ENCODE measurements at regions of chr1 and their contacts with region 1.

Region 1: GRCh38 chr1:163231385-163231784 is 28.7 kb upstream of the RGS5 start:
- DNase-seq: no peak
- H3K4me3 Mint-ChIP-seq: no peak overlapping the region
- H3K27ac Mint-ChIP-seq: no peak overlapping the region
- H3K4me1 Mint-ChIP-seq: no peaks in the 10 kb centered on the region
- H3K27me3 Mint-ChIP-seq: no peaks in the 10 kb centered on the region
- CTCF ChIP-seq: no peak

Region 2: DNA sequence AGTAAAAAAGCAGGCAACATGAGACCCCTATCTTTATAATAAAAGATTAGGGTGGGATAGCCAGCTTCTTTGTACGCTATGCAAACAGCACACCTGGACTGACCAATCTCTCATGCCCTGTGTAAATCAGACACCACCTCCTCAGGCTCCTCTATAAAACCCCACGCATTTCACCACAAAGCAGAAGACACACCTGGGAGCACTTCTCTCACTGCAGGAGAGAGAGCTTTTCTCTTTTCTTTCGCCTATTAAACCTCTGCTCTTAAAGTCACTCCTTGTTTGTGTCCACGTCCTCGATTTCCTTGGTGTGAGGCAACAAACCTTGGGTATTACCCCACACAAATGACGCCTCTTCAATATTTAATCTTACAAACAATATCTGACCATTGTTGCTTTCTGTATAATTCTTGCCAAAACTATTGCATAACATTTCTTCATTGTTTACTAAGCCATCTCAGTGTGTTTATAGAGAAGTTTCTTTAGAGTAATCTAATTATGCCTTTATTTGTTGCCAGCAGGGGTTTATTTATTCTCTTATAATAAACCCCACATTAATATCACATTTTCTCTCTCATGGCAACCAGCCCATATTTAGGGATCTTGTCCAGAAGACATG is 58.7 kb after region 1 on chr1:
- CTCF ChIA-PET with region 1: no interaction called
- POLR2A ChIA-PET with region 1: no interaction called
- intact Hi-C with region 1: loop called (anchors 10 kb)
- DNase-seq: peak; percentile 91
- H3K4me3 Mint-ChIP-seq: no peak overlapping the region
- H3K27ac Mint-ChIP-seq: peak overlapping the region; percentile 8
- H3K4me1 Mint-ChIP-seq: peaks cover 6% of the 10 kb centered on the region
- H3K27me3 Mint-ChIP-seq: no peaks in the 10 kb centered on the region
- CTCF ChIP-seq: no peak

Measured in MCF 10A (cell line).